ENCODE measurements at regions of chr4 and their contacts with region 1.

Region 1: GRCh38 chr4:177047070-177047850 is 254.5 kb upstream of the VEGFC start:
- DNase-seq: peak; percentile 5 to 63 (median 23)
- ATAC-seq: peak; percentile 78
- H3K4me3 ChIP-seq: no peak overlapping the region
- H3K4me3 Mint-ChIP-seq: no peak overlapping the region
- H3K27ac ChIP-seq: no peak overlapping the region
- H3K27ac Mint-ChIP-seq: no peak overlapping the region
- H3K4me1 ChIP-seq: no peaks in the 10 kb centered on the region
- H3K4me1 Mint-ChIP-seq: no peaks in the 10 kb centered on the region
- H3K27me3 ChIP-seq: no peaks in the 10 kb centered on the region
- H3K27me3 Mint-ChIP-seq: peaks cover 10% of the 10 kb centered on the region
- CTCF ChIP-seq: peak; percentile 54

Region 2: GRCh38 chr4:176036585-176037205 is 1010.6 kb before region 1 on chr4:
- CTCF ChIA-PET with region 1: interaction called, 3 read pairs
- POLR2A ChIA-PET with region 1: no interaction called
- intact Hi-C with region 1: loop called in 1 of 2 experiments (anchors 5 kb)
- DNase-seq: no peak
- ATAC-seq: no peak
- H3K4me3 ChIP-seq: no peak overlapping the region
- H3K4me3 Mint-ChIP-seq: no peak overlapping the region
- H3K27ac ChIP-seq: no peak overlapping the region
- H3K27ac Mint-ChIP-seq: no peak overlapping the region
- H3K4me1 ChIP-seq: no peaks in the 10 kb centered on the region
- H3K4me1 Mint-ChIP-seq: no peaks in the 10 kb centered on the region
- H3K27me3 ChIP-seq: no peaks in the 10 kb centered on the region
- H3K27me3 Mint-ChIP-seq: peaks cover 4% of the 10 kb centered on the region
- CTCF ChIP-seq: no peak

Region 3: GRCh38 chr4:176377780-176378179 is 669.5 kb before region 1 on chr4:
- CTCF ChIA-PET with region 1: no interaction called
- POLR2A ChIA-PET with region 1: no interaction called
- intact Hi-C with region 1: loop called in 1 of 2 experiments (anchors 10 kb)
- DNase-seq: peak in 1 of 14 experiments; percentile 3
- ATAC-seq: no peak
- H3K4me3 ChIP-seq: no peak overlapping the region
- H3K4me3 Mint-ChIP-seq: no peak overlapping the region
- H3K27ac ChIP-seq: no peak overlapping the region
- H3K27ac Mint-ChIP-seq: no peak overlapping the region
- H3K4me1 ChIP-seq: no peaks in the 10 kb centered on the region
- H3K4me1 Mint-ChIP-seq: no peaks in the 10 kb centered on the region
- H3K27me3 ChIP-seq: no peaks in the 10 kb centered on the region
- H3K27me3 Mint-ChIP-seq: no peaks in the 10 kb centered on the region
- CTCF ChIP-seq: no peak

Region 4: DNA sequence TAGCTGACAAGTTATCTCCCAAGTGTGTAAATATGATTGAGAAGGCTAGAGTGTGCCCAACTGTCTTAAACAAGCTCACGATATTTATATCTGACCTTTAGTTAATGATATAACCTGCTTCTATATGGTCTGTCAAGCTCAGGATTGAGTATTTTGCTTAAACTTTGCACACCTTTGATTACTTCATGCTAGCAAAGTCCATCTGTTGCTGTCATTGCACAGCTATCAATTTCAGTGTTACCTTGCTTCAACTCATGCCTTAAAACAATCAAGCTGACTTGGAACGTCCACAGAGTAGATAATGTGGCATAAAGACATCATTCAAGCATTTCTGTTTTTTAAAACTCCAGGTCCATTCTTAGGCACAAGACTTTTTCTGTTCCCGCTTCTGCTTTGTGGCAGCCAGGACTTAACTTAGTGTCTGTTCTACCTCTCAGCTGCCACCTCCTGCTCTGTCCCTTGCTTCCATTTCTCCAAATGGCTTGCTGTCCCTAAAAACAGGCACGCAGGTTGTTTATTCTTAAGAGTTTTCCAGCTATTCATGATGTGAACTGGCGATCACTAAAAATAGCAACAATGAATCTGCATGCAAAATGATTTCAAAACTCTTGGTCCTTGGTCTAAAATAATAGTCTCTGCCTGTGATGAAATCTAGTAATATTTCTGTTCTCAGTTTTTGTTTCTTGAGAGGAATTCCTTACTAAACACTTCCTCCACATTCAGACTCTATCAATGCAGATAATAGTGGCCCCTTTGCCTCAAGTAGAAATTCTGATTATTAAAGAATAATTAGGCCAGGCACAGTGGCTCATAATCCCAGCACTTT is 246.2 kb after region 1 on chr4:
- CTCF ChIA-PET with region 1: no interaction called
- POLR2A ChIA-PET with region 1: no interaction called
- intact Hi-C with region 1: no loop called
- DNase-seq: no peak
- ATAC-seq: no peak
- H3K4me3 ChIP-seq: no peak overlapping the region
- H3K4me3 Mint-ChIP-seq: no peak overlapping the region
- H3K27ac ChIP-seq: no peak overlapping the region
- H3K27ac Mint-ChIP-seq: no peak overlapping the region
- H3K4me1 ChIP-seq: no peaks in the 10 kb centered on the region
- H3K4me1 Mint-ChIP-seq: no peaks in the 10 kb centered on the region
- H3K27me3 ChIP-seq: peaks cover 0 to 5% of the 10 kb centered on the region in 2 experiments
- H3K27me3 Mint-ChIP-seq: no peaks in the 10 kb centered on the region
- CTCF ChIP-seq: no peak

Measured in CD4-positive, alpha-beta T cell (primary cell).